Activated CD4-positive, alpha-beta T cell treated with anti-CD3 and anti-CD28 coated beads for 36 hours (primary cell): ENCODE measurements at regions of chr22 and their contacts with region 1.

Region 1: GRCh38 chr22:28379075-28379779 is 300.4 kb downstream of the TTC28 start:
- DNase-seq: no peak
- ATAC-seq: peak; percentile 85
- H3K4me3 Mint-ChIP-seq: no peak overlapping the region
- H3K27ac Mint-ChIP-seq: no peak overlapping the region
- H3K4me1 Mint-ChIP-seq: peaks cover 11% of the 10 kb centered on the region
- H3K27me3 Mint-ChIP-seq: no peaks in the 10 kb centered on the region

Region 2: GRCh38 chr22:28402539-28402938 is 23.3 kb after region 1 on chr22:
- CTCF ChIA-PET with region 1: no interaction called
- POLR2A ChIA-PET with region 1: no interaction called
- intact Hi-C with region 1: loop called in 1 of 2 experiments (anchors 1 kb)
- DNase-seq: peak; percentile 7
- ATAC-seq: peak; percentile 95
- H3K4me3 Mint-ChIP-seq: no peak overlapping the region
- H3K27ac Mint-ChIP-seq: peak overlapping the region; percentile 72
- H3K4me1 Mint-ChIP-seq: peaks cover 16% of the 10 kb centered on the region
- H3K27me3 Mint-ChIP-seq: no peaks in the 10 kb centered on the region